ENCODE measurements at regions of chr14 and their contacts with region 1.

Region 1: DNA sequence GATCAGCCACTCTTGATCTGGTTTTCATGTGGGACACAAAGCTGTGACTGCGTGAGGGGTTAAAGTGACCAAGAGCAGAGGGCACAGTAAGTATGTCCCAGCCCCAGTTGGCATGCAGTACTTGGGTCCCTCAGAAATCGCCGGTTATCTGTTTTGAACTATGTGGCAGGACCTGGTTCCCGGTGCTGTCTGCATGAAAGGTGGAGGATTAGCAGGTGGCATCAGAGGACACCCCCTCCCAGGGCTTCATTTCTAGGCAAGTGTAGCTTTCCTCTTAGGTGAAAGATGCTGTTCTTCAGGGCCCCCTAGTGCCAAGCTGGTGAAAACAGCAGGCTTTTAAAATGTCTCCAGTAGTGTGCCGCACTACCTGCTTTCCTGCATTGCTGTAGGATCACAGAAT is 57.1 kb downstream of the ATG14 start:
- DNase-seq: peak in 3 of 6 donors; percentile 39 to 49 (median 48)
- ATAC-seq: peak; percentile 80 to 96 (median 92)
- H3K4me3 ChIP-seq: no peak overlapping the region
- H3K27ac ChIP-seq: no peak overlapping the region
- H3K4me1 ChIP-seq: peaks cover 0 to 3% (median 0%) of the 10 kb centered on the region in 3 donors
- H3K27me3 ChIP-seq: no peaks in the 10 kb centered on the region
- CTCF ChIP-seq: peak in 3 of 4 donors; percentile 7 to 45 (median 36)

Region 2: GRCh38 chr14:55245657-55246268 is 108.7 kb before region 1 on chr14:
- intact Hi-C with region 1: loop called in 1 of 3 experiments (anchors 10 kb)
- DNase-seq: peak in 2 of 6 donors; percentile 22 to 24
- ATAC-seq: peak in 3 of 4 donors; percentile 44 to 63 (median 60)
- H3K4me3 ChIP-seq: no peak overlapping the region
- H3K27ac ChIP-seq: no peak overlapping the region
- H3K4me1 ChIP-seq: no peaks in the 10 kb centered on the region
- H3K27me3 ChIP-seq: no peaks in the 10 kb centered on the region
- CTCF ChIP-seq: peak in 3 of 4 donors; percentile 38 to 54 (median 38)

Region 3: DNA sequence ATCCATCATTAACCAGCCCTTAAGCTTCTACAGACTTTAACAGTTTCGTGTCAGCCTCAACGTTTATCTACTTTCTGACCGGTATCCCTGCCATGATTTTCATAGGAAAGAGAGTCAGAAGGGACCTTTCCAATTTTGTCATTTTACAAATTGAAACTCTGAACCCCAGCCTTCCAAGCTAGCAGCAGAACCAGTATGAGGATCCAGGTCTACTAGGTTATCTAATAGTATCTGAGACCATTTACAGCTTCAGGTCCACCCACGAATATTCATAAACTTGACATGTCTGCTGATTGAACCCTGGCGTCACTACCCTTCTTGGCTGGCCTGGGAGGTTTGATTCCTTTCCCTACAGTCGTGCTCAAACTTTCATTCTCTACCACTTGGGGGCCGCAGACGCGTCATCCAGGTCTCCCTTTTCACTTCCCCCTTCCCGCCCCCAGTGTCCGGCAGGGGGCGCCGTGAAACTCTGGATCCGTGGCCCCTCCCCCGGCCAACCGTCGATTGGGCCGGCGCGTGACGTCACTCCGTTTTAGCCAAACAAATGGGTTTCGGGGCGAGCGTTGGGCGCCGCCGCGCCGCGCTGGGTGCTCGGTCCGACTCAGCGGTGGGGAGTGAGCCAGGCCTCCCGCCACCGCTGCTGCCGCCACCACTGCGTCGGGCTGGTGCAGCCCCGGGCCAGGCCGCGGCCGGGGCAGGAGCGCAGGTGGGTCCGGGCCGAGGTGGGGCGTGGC is 83.5 kb before region 1 on chr14 and contains the start of gene FBXO34:
- intact Hi-C with region 1: loop called in 1 of 3 experiments (anchors 5 kb)
- DNase-seq: peak; percentile 97 to 100 (median 99)
- ATAC-seq: peak; percentile 91 to 95 (median 93)
- H3K4me3 ChIP-seq: peak within 1 kb of the TSS; percentile 53 to 90 (median 88)
- H3K27ac ChIP-seq: peak within 1 kb of the TSS; percentile 89 to 97 (median 96)
- H3K4me1 ChIP-seq: peaks cover 0 to 32% (median 23%) of the 10 kb centered on the region in 3 donors
- H3K27me3 ChIP-seq: no peaks in the 10 kb centered on the region
- CTCF ChIP-seq: peak; percentile 98 to 100 (median 99)
- total RNA-seq, gene FBXO34: 8.2 to 19.7 (median 9.5) TPM

Region 4: GRCh38 chr14:55430024-55430690 is 75.7 kb after region 1 on chr14:
- intact Hi-C with region 1: no loop called
- DNase-seq: peak in 3 of 6 donors; percentile 24 to 44 (median 36)
- ATAC-seq: peak; percentile 66 to 96 (median 92)
- H3K4me3 ChIP-seq: no peak overlapping the region
- H3K27ac ChIP-seq: no peak overlapping the region
- H3K4me1 ChIP-seq: no peaks in the 10 kb centered on the region
- H3K27me3 ChIP-seq: no peaks in the 10 kb centered on the region
- CTCF ChIP-seq: peak in 3 of 4 donors; percentile 8 to 26 (median 9)

Measured in pancreas (tissue), 10 donors.